Left cardiac atrium (tissue), 4 donors: ENCODE measurements at regions of chr12 and their contacts with region 1.

Region 1: DNA sequence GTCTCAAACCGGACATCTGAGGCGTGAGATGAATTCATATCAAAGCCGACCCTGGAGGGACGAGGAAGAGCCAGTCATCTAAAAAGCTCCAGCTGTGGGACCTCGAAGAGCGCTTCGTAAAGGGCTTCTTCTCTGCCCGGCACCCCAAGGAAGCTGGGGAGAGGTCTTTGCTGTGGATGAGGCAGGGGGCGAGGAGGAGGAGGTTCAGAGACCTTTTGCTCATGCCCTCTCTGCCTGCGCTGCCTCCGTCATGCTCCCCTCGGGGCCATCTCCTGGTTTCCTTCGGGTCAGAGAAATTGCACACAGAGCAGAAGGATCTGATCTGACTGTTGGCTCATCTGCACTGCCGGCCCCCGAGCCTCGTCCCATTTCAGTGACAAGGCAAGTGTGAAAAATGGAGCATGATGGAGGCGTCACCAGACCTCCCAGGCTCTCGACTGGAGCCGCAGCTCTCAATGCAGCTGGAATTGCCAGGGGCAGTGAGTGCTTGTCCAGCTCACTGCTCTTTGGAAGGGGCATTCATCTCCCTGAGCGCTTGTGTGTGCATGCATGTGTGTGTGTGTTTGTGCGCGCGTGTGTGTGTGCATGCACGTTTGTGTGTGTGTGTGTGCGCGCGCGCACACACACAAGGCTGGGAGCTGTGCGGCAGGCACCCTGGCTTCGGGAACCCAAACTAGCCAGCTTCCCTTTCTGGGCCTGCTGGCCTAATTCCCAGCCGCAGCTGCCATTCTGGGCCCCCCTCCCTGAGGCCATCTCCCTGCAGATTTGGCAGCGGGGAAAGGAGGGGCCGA is 9.2 kb downstream of the CABP1 start:
- DNase-seq: no peak
- ATAC-seq: peak in 1 of 2 donors; percentile 25

Region 2: GRCh38 chr12:120713861-120714482 is 64.3 kb after region 1 on chr12:
- intact Hi-C with region 1: loop called (anchors 2 to 5 kb)
- DNase-seq: peak; percentile 65
- ATAC-seq: peak; percentile 55 to 59

Region 3: DNA sequence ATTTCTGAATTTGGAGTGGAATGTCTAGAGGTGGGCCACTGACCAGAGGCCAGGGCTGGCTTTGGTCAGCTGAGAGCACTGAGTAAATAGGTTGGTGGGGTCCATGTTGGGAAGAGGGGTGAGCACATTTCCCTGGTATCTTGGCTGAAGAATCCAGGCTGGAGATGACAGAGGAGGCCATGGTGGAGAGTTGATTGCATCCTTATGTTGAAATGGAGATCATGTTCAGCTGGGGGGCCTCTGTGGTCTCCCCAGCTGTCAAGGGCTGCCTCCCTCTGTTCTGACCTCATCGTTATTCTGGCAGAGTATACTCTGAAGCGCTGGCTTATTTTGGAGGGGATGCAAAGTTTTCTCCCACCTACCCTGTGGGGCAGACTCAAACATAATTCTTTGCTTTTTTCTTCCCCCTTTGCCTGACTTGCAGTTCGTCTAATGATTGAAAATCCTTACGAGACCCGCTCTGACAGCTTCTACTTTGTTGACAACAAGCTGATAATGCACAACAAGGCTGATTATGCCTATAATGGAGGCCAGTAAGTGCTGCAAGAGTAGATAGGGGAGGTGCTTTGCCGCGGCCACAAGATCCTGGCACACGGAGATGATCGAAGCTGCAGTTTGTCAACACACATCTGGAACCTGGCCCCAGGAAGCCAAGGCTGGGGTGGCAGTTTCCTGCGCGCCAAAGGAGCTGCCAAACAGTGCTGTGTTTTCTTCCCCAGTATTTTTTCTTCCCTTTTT is 70.0 kb after region 1 on chr12:
- intact Hi-C with region 1: loop called (anchors 2 to 5 kb)
- DNase-seq: no peak
- ATAC-seq: no peak

Region 4: DNA sequence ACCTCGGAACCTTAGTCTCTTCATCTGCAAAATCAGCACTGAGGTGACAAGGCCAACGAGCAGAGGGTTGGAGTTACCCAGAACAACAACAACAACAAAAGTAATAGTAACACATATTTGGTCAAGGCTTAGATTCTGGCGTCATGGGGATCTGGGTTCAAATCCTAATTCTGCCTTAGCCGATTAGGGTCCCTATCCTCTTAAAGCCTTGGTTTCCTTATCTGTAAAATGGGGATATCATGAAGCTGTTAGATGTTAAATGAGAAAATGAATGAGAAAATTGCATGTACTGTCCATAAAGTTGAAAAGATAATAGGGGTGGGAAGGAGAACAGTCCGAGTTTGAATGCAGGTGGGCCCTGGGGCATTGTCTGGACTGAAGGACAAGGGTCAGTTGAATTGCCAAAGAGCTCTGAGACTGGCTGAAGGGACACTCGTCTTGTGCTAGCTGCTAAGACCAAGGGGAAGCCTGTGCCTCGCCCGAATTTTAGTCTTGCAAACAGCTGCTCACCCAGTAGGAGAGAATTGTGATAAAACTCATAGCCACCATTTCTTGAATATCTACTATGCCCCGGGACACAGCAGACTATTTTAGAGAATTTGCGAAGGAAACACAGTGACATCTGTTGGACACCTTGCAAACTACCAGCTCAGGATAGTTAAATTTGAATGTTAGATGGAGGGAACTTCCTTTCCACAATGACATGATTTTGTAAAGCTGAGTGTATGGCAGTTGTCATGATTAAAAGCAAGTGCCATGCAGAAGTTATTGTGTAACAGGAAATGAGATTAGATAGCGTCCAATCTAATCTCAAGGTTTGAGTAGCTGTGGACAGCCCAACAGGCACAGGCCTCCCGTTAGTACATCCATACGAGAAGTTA is 321.9 kb after region 1 on chr12:
- intact Hi-C with region 1: loop called (anchors 5 to 10 kb)
- DNase-seq: no peak
- ATAC-seq: peak; percentile 84 to 88